Natural killer cell (primary cell): ENCODE measurements at regions of chr22 and their contacts with region 1.

Region 1: DNA sequence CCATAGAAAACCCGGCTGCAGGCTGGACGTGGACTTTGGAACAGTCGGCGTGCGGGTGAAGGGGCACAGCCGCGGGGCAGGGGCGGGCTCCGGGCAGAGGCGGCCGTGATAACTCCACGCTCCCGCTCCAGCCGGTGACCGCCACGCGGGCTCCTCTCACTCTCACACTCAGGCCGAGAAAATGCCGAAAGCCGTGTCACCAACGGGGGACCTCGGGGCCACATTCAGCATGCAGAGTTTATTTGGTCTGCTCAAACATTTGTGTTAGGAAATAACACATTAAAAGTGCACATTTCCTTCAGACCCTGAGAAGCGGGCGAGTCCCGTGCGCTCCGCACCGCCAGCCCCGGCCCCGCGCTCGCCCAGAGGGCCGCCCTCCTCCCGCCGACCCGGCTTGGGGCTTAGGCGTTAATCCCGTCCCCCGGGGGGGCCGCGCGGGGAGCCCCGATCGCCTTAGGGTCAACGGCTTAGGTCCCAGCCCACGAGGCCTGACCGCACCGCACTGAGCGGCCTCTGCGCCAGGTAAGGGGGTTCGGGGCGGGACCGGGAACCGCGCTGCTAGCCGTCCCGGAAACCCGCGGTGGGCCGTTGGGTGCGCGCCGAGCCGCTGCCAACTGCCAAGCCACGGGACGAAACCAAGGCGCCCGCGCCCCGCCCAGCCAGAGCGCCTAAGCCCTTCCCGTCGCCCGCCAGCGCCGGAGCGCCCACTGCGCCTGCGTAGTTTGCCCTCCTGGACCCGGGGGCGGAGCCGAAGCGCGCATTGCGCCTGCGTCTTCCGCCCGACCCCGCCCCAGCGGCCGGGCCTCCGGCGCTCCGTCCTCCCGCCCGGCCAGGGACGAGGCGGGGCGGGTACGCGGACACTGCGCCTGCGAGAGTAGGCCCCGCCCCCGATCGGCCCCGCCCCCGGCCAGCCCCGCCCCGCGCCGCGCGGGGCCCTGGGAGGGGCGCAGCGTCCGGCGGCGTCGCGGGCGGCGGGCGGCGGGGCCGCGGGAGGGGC is at the start of gene ZBED4:
- DNase-seq: peak; percentile 99
- ATAC-seq: peak; percentile 87 to 96 (median 89)
- H3K4me3 ChIP-seq: peak within 1 kb of the TSS; percentile 63
- H3K4me3 Mint-ChIP-seq: peak within 1 kb of the TSS; percentile 97
- H3K27ac ChIP-seq: peak within 1 kb of the TSS; percentile 77
- H3K27ac Mint-ChIP-seq: peak within 1 kb of the TSS; percentile 90 to 92
- H3K4me1 ChIP-seq: peaks cover 58% of the 10 kb centered on the region
- H3K4me1 Mint-ChIP-seq: peaks cover 27 to 44% of the 10 kb centered on the region in 2 donors
- H3K27me3 ChIP-seq: peaks cover 16% of the 10 kb centered on the region
- H3K27me3 Mint-ChIP-seq: peaks cover 18 to 21% of the 10 kb centered on the region in 2 donors
- CTCF ChIP-seq: no peak
- total RNA-seq, gene ZBED4: 21.1 to 24.5 (median 22.7) TPM

Region 2: DNA sequence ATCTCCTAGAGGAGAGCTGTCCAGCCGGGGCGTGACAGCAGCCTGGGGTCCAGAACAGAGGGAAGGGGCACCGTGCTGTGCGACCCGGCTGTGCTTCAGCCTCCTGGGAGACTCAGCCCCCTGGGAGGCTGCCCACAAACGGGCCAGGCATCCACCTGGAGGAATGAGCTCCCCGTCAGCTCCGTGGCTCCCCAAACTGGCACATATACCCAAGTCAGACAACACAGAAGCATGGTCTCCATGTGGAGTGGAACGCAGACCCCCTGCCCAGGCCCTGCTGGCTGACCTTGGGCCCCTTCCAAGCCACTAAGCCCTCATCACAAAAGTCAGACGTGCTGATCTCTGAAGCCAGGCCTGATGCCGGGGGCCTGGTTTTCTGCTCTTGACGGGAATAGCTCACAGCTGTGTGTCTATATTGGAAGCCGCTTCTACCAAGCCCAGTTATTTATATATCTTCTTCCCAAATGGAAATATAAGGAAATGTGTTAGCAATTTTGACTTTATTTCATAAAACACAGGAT is 117.2 kb before region 1 on chr22:
- intact Hi-C with region 1: no loop called
- DNase-seq: no peak
- ATAC-seq: no peak
- H3K4me3 ChIP-seq: no peak overlapping the region
- H3K4me3 Mint-ChIP-seq: no peak overlapping the region
- H3K27ac ChIP-seq: no peak overlapping the region
- H3K27ac Mint-ChIP-seq: no peak overlapping the region
- H3K4me1 ChIP-seq: peaks cover 7% of the 10 kb centered on the region
- H3K4me1 Mint-ChIP-seq: peaks cover 9 to 18% of the 10 kb centered on the region in 2 donors
- H3K27me3 ChIP-seq: no peaks in the 10 kb centered on the region
- H3K27me3 Mint-ChIP-seq: peaks cover 24 to 55% of the 10 kb centered on the region in 2 donors
- CTCF ChIP-seq: no peak

Region 3: GRCh38 chr22:49838771-49839717 is 14.2 kb before region 1 on chr22:
- intact Hi-C with region 1: loop called (anchors 1 kb)
- DNase-seq: peak; percentile 64 to 97
- ATAC-seq: peak; percentile 95 to 98 (median 97)
- H3K4me3 ChIP-seq: peak overlapping the region; percentile 26
- H3K4me3 Mint-ChIP-seq: peak overlapping the region; percentile 70
- H3K27ac ChIP-seq: peak overlapping the region; percentile 92
- H3K27ac Mint-ChIP-seq: peak overlapping the region; percentile 84 to 90
- H3K4me1 ChIP-seq: peaks cover 22% of the 10 kb centered on the region
- H3K4me1 Mint-ChIP-seq: peaks cover 13 to 14% of the 10 kb centered on the region in 2 donors
- H3K27me3 ChIP-seq: no peaks in the 10 kb centered on the region
- H3K27me3 Mint-ChIP-seq: no peaks in the 10 kb centered on the region
- CTCF ChIP-seq: no peak

Region 4: GRCh38 chr22:49867303-49868265 is 14.4 kb after region 1 on chr22:
- intact Hi-C with region 1: loop called (anchors 2 kb)
- DNase-seq: peak in 1 of 2 donors; percentile 62
- ATAC-seq: peak; percentile 41 to 68 (median 45)
- H3K4me3 ChIP-seq: no peak overlapping the region
- H3K4me3 Mint-ChIP-seq: peak overlapping the region; percentile 69
- H3K27ac ChIP-seq: peak overlapping the region; percentile 67
- H3K27ac Mint-ChIP-seq: peak overlapping the region; percentile 84 to 86
- H3K4me1 ChIP-seq: peaks cover 48% of the 10 kb centered on the region
- H3K4me1 Mint-ChIP-seq: peaks cover 65 to 67% of the 10 kb centered on the region in 2 donors
- H3K27me3 ChIP-seq: no peaks in the 10 kb centered on the region
- H3K27me3 Mint-ChIP-seq: no peaks in the 10 kb centered on the region
- CTCF ChIP-seq: no peak

Region 5: DNA sequence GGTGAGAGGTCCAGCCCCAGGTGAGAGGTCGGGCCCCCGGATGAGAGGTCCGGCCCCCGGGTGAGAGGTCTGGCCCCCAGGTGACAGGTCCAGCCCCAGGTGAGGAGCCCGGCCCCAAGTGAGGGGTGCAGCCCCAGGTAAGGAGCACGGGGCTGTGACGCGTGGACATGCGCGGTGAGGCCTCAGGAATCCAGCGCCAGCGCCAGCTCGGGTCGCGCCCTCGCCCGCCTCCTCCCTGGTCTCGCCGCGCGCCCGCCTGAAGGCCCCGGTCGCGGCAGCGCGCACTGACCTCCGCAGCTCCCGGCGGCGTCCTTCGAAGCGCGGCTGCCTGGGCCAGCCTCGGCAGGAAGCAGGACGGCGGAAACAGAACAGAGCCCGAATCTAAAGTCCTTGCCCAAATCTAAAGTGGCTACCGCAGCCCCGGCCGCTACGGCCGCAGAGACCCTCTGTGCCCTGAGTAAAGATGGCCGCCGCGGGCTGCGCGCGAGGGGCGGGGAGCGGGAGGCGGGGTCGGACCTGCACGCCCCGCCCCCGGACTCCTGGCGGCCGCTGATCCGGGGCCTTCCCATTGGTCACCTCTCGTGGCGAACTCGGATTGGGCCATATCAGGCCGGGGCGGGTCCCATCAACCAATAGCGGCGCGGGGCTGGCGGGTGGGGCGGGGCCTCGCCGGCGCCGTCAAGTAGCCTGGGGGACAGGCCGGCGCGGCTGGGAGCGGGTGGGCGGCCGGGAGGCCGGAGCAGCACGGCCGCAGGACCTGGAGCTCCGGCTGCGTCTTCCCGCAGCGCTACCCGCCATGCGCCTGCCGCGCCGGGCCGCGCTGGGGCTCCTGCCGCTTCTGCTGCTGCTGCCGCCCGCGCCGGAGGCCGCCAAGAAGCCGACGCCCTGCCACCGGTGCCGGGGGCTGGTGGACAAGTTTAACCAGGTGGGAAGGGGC is 65.0 kb after region 1 on chr22 and contains the starts of genes ALG12 and CRELD2:
- intact Hi-C with region 1: loop called (anchors 10 kb)
- DNase-seq: peak; percentile 96 to 97
- ATAC-seq: peak; percentile 96 to 99 (median 97)
- H3K4me3 ChIP-seq: peak within 1 kb of the TSS; percentile 76
- H3K4me3 Mint-ChIP-seq: peak within 1 kb of the TSS; percentile 86
- H3K27ac ChIP-seq: peak within 1 kb of the TSS; percentile 84
- H3K27ac Mint-ChIP-seq: peak within 1 kb of the TSS; percentile 70 to 88
- H3K4me1 ChIP-seq: peaks cover 26% of the 10 kb centered on the region
- H3K4me1 Mint-ChIP-seq: peaks cover 0 to 11% of the 10 kb centered on the region in 2 donors
- H3K27me3 ChIP-seq: no peaks in the 10 kb centered on the region
- H3K27me3 Mint-ChIP-seq: no peaks in the 10 kb centered on the region
- CTCF ChIP-seq: no peak
- total RNA-seq, gene ALG12: 17.2 to 22.7 (median 19.2) TPM
- total RNA-seq, gene CRELD2: 45.1 to 69.8 (median 48.5) TPM